H1 (cell line): ENCODE measurements at regions of chr17 and their contacts with region 1.

Region 1: GRCh38 chr17:78140169-78140976 is 5.8 kb upstream of the C17orf99 start:
- DNase-seq: peak; percentile 98 to 100
- H3K4me3 ChIP-seq: peak overlapping the region in 3 of 4 experiments; percentile 18 to 45 (median 24); a peak in 5 of 8 replicates
- H3K27ac ChIP-seq: no peak overlapping the region
- H3K4me1 ChIP-seq: peaks cover 0 to 6% (median 5%) of the 10 kb centered on the region in 4 experiments; a peak in 3 of 7 replicates
- H3K27me3 ChIP-seq: 0 out of 7 replicates have a peak, but pooled peaks cover 0 to 2% (median 0%) of the 10 kb centered on the region in 4 experiments
- CTCF ChIP-seq: no peak
- EP300 ChIP-seq: no peak
- POLR2A ChIP-seq: peak in 1 of 2 experiments; percentile 60; a peak in 2 of 3 replicates
- RAD21 ChIP-seq: no peak

Region 2: DNA sequence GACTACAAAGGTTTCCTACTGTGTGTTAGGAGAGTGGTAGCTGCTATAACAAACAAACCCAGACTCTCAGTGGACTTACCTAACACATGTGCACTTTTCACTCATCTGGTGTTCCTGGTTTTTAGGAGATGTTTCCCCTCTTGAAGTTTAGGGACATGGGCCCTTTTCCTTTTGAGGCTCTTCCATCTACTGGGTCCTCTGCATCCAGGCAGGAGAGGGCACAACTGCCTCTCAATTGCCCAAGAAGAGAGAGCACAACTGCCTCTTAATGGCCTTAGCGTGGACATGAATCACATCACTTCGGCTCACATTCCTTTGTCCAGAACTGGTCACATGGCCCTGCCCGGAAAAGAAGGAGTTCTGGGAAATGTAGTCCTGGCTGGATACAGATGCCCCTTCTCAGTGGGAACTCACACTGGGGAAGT is 191.7 kb before region 1 on chr17:
- CTCF ChIA-PET with region 1: no interaction called
- POLR2A ChIA-PET with region 1: no interaction called
- DNase-seq: no peak
- H3K4me3 ChIP-seq: peak overlapping the region in 1 of 4 experiments; percentile 35; a peak in 1 of 8 replicates
- H3K27ac ChIP-seq: no peak overlapping the region
- H3K4me1 ChIP-seq: peaks cover 0 to 6% (median 1%) of the 10 kb centered on the region in 4 experiments; a peak in 2 of 7 replicates
- H3K27me3 ChIP-seq: peaks cover 0 to 3% (median 1%) of the 10 kb centered on the region in 4 experiments; a peak in 1 of 7 replicates
- CTCF ChIP-seq: no peak
- EP300 ChIP-seq: no peak
- POLR2A ChIP-seq: no peak
- RAD21 ChIP-seq: no peak

Region 3: DNA sequence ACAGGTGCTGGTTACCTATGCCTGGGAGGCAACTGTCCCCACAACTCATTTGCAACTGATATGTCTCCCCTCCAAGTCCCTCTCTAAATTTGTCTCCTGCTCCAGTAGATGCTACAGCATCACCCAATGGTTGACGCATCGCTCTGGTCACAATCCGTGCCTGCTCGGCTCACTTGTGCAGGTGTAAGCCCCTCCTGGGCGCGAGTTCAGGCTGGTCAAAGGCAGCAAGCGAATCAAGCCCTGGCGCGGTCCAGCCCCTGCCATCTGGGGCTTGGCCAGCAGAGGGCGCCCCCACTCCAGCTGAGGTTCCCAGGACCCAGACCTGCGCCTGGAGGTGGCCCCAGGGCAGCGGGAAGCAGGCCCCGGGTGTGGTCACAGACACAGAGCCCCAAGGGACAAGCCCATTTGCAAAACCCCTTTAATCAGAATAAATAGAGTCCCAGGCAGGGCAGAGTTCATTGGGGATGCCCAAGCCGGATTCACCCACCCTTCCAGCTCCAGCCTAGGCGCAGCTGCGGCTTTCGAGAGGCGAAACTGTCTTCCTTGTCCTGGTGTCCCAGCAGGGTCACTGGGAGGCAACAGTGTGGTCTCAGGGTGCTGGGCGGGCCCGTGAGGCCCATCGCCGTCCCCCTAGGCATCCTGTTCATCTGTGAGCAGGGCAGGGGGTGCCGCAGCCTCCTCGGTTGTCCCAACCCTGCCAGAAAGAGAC is 27.7 kb before region 1 on chr17:
- CTCF ChIA-PET with region 1: interaction called, 122 read pairs
- POLR2A ChIA-PET with region 1: interaction called, 16 read pairs
- DNase-seq: peak; percentile 64 to 100
- H3K4me3 ChIP-seq: no peak overlapping the region
- H3K27ac ChIP-seq: no peak overlapping the region
- H3K4me1 ChIP-seq: no peaks in the 10 kb centered on the region; a peak in 1 of 7 replicates
- H3K27me3 ChIP-seq: no peaks in the 10 kb centered on the region
- CTCF ChIP-seq: peak; percentile 95 to 99 (median 98)
- EP300 ChIP-seq: 0 out of 3 replicates have a peak, but pooled peaks of 1 of the 2 experiments have one; percentile 7
- POLR2A ChIP-seq: peak in 1 of 2 experiments; percentile 29; a peak in 1 of 3 replicates
- RAD21 ChIP-seq: peak; percentile 95 to 98

Region 4: DNA sequence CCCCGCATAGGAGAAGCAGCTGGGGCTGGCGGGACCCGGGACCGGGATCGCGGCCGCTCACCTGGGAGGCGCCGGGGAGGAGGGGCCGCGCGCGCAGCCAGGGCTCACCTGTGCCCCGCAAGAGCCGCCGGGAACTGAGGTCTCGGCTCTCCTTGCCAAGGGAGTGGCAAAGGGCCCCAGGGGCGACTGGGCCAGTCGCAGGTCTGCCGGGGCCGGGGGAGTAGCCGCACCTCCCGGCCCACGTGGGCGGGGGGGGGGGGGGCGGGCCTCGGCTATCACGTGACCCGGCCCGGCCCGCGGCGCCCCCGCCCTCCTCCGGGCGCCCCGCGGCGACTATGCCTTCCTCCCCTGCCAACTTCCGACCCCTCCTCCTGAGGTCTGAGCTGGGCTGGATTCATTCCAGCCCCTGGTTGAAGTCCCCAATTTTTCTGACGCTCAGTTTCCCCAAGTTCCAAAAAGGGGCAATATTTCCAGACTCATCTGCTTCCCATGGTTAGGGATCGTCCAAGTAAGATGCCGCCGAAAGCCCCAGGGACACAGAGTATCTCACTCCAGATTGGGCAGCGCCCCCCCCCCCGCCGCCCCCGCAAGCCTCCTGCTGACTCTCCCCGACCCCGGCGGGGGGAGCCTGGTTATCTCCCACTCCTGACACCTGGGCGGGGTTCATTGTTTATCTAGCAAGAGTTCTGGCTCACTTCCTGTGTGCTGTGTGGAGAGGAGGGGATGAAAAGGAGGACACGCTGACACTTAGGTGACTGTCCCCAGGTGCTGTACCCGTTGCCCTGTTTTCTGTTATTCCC is 11.6 kb before region 1 on chr17 and contains the start of gene TMC6:
- CTCF ChIA-PET with region 1: interaction called, 122 read pairs
- POLR2A ChIA-PET with region 1: interaction called, 16 read pairs
- DNase-seq: peak in 1 of 2 experiments; percentile 89
- H3K4me3 ChIP-seq: peak within 1 kb of the TSS; percentile 62 to 94 (median 70)
- H3K27ac ChIP-seq: no peak within 1 kb of the TSS; the same call in 1 of the 2 replicates
- H3K4me1 ChIP-seq: peaks cover 0 to 27% (median 17%) of the 10 kb centered on the region in 4 experiments; a peak in 6 of 7 replicates
- H3K27me3 ChIP-seq: peaks cover 0 to 23% (median 14%) of the 10 kb centered on the region in 4 experiments; a peak in 5 of 7 replicates
- CTCF ChIP-seq: no peak
- EP300 ChIP-seq: no peak
- POLR2A ChIP-seq: 0 out of 3 replicates have a peak, but pooled peaks of 1 of the 2 experiments have one; percentile 59
- RAD21 ChIP-seq: no peak
- total RNA-seq, gene TMC6: 73.1 and 77.6 TPM in 2 replicates

Region 5: DNA sequence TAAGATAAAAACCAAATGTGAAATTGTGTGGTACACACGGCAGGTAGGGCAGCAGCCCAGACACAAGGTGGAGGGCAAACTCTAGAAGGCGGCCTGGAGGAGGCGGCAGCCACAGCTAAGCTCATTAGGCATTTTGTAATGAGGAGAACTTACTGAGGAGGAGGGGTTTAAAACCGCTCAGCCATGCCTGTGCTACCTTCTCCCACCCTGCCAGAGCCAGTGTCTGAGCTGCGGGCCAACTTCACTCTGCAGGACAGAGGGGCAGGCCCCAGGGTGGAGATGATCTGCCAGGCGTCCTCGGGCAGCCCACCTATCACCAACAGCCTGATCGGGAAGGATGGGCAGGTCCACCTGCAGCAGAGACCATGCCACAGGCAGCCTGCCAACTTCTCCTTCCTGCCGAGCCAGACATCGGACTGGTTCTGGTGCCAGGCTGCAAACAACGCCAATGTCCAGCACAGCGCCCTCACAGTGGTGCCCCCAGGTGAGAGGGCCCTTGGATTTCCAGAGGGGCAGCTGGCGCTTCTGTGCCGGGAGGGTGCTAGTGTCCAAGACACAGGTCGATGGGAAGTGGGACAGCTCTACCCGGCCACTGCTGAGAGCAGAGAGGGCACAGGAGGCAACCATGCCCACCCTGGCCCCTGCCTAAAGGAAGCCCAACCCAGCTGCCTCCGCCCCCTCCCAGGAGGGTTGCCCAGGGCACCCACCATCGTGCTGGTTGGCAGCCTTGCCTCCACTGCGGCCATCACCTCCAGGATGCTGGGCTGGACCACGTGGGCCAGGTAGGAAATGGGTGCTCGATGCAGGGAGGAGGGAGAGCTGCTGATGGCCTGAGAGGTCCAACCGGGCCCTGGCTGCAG is 23.7 kb after region 1 on chr17:
- CTCF ChIA-PET with region 1: interaction called, 20 read pairs
- POLR2A ChIA-PET with region 1: interaction called, 40 read pairs
- DNase-seq: no peak
- H3K4me3 ChIP-seq: no peak overlapping the region
- H3K27ac ChIP-seq: no peak overlapping the region
- H3K4me1 ChIP-seq: peaks cover 0 to 12% (median 6%) of the 10 kb centered on the region in 4 experiments; a peak in 6 of 7 replicates
- H3K27me3 ChIP-seq: no peaks in the 10 kb centered on the region
- CTCF ChIP-seq: 0 out of 4 replicates have a peak, but pooled peaks of 1 of the 3 experiments have one; percentile 3
- EP300 ChIP-seq: no peak
- POLR2A ChIP-seq: no peak
- RAD21 ChIP-seq: no peak

Region 6: DNA sequence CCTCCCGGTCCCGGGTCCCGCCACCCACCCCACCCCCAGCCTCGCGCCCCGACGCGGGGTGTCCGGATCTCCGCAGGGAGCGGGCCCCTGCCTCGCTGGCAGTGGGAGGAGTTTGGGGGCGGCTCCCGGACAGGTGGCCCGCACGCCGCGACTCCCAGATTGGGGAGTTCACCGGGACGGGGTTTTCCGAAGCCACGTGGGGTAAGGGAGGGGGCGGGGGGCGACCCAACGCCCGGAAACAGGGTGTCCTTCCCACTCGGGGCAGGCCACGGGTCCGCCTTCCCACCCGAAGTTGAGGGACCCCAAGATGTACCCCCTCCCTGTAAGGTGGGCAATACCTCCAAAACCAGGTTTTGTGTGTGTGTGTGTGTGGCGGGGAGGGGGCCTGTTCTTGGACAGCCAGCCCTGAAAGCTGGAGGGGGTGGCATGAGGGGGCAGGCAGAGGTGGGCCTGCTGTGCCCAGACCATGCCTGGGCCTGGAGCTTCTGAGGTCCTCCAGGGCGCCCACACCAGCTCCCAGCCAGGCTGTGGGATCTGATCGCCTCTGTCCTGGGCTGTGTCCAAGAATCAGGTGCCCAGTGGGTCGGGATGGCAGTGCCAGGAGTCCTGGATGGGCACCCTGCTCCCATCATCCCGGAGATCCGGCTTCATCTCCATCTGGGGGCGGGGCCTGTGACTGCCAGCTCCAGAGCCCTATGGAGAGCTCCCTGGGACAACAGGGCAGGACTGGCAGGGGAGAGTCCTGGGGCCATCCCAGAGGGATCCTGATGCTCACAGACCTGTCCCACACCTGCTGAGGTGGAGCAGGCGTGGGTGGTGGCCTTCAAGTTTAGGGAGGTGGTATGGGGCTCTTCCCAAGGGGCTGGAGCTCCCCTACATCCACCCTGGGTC is 28.8 kb after region 1 on chr17:
- CTCF ChIA-PET with region 1: interaction called, 87 read pairs
- POLR2A ChIA-PET with region 1: interaction called, 40 read pairs
- DNase-seq: peak in 1 of 2 experiments; percentile 80
- H3K4me3 ChIP-seq: peak overlapping the region; percentile 57 to 87 (median 65)
- H3K27ac ChIP-seq: no peak overlapping the region
- H3K4me1 ChIP-seq: peaks cover 5 to 39% (median 19%) of the 10 kb centered on the region in 4 experiments
- H3K27me3 ChIP-seq: no peaks in the 10 kb centered on the region
- CTCF ChIP-seq: no peak
- EP300 ChIP-seq: no peak
- POLR2A ChIP-seq: no peak
- RAD21 ChIP-seq: no peak

Region 7: GRCh38 chr17:78176548-78177025 is 36.2 kb after region 1 on chr17:
- CTCF ChIA-PET with region 1: interaction called, 87 read pairs
- POLR2A ChIA-PET with region 1: interaction called, 40 read pairs
- DNase-seq: peak in 1 of 2 experiments; percentile 92
- H3K4me3 ChIP-seq: no peak overlapping the region
- H3K27ac ChIP-seq: no peak overlapping the region
- H3K4me1 ChIP-seq: peaks cover 5 to 17% (median 7%) of the 10 kb centered on the region in 4 experiments
- H3K27me3 ChIP-seq: no peaks in the 10 kb centered on the region
- CTCF ChIP-seq: peak; percentile 89 to 99 (median 94)
- EP300 ChIP-seq: no peak
- POLR2A ChIP-seq: peak in 1 of 2 experiments; percentile 49; a peak in 1 of 3 replicates
- RAD21 ChIP-seq: peak; percentile 48 to 70